Motor neuron (in vitro differentiated cells): ENCODE measurements at regions of chr11 and their contacts with region 1.

Region 1: DNA sequence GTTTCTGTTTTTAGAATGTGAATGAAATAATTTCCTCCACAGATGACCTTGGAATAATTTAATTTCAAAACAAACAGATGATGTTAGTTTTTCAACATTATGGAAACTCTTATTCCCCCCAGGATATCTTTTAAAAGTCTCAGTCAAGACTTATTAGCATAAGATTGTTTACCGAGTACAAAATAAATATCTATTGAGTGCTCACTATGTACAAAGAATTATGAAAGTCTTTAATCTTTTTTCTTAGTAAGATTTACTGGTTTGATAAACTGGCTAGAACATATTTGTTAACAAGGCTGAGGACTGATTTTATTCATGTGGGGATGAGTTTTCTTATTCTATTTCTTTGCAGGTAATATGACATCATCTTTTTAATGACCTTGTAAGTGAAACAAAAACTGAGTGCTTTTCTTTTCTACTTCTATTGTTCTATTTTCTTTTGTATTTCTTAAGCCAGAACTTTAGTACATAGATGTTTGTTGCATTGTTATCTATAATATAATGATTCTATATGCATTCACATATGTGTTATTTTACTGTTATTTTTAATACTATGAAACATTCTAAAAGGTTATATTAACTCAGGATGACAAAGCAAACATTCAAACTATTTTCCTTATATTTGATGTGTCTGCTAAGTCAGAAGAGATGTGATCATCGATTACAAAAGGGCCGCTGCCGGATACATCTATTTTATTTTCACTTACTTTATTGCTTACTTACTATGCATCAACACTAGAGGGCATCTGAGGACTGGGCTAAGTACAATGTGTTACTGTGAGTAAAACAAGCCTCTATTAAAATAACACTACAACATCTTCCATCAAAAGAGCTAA is 111.0 kb upstream of the ARHGAP42 start:
- ATAC-seq: peak; percentile 47 to 87 (median 66)
- H3K4me3 ChIP-seq: no peak overlapping the region
- H3K27ac ChIP-seq: no peak overlapping the region
- H3K4me1 ChIP-seq: no peaks in the 10 kb centered on the region

Region 2: DNA sequence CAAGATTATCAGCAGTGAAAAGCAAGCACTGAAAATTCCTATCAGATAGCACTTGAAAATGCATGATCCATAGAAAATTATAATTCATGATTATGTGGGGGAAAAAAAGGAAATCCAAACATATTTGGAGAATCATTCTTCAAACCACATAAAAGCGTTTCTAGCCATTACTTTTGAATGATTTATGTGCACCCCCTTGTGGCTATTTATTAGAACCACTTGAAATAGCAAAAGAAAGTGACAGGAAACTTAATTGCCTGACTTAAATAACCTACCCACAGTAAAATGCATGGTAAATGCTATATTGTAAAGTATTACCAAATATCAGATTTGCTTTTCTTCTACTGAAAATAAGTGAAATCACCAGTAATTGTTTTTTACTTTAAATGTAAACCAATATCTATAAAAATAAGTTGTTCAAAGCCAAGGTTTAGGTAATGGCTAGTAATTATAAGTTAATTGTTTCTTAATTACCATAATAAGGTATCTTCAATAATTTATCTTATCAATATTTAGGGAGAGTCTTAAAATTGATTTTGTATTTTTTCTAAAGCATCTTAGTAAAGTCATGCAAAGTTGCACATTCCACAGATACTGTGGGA is 279.5 kb after region 1 on chr11:
- in situ Hi-C with region 1: loop called in 1 of 9 experiments (anchors 25 kb)
- ATAC-seq: peak in 1 of 8 experiments; percentile 16
- H3K4me3 ChIP-seq: no peak overlapping the region
- H3K27ac ChIP-seq: no peak overlapping the region
- H3K4me1 ChIP-seq: peaks cover 0 to 21% of the 10 kb centered on the region in 2 donors

Region 3: DNA sequence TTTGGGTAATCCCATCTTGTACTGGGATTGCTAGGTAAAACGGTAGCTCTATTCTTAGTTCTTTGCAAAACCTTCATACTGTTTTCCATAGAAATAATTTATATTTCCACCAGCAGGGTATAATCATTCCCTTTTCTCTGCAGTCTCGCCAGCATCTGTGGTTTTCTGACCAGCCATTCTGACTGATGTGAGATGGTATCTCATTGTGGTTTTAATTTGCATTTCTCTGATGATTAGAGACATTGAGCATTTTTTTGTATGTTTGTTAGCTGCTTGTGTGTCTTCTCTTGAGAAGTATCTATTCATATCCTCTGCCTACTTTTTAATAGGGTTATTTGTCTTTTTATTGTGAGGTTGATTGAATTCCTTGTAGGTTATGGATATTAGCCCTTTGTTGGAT is 332.7 kb after region 1 on chr11:
- in situ Hi-C with region 1: loop called in 1 of 9 experiments (anchors 25 kb)
- ATAC-seq: peak in 3 of 8 experiments; percentile 33 to 74 (median 59)
- H3K4me3 ChIP-seq: no peak overlapping the region
- H3K27ac ChIP-seq: no peak overlapping the region
- H3K4me1 ChIP-seq: no peaks in the 10 kb centered on the region